Activated B cell treated with CpG ODN at 0.5 μM for 24 hours (primary cell): ENCODE measurements at regions of chr20 and their contacts with region 1.

Region 1: GRCh38 chr20:34676642-34677373 is at the start of gene PIGU:
- DNase-seq: peak; percentile 91
- ATAC-seq: peak; percentile 94
- H3K4me3 Mint-ChIP-seq: peak within 1 kb of the TSS; percentile 98
- H3K27ac Mint-ChIP-seq: peak within 1 kb of the TSS; percentile 95
- H3K4me1 Mint-ChIP-seq: peaks cover 15% of the 10 kb centered on the region
- H3K27me3 Mint-ChIP-seq: no peaks in the 10 kb centered on the region
- CTCF ChIP-seq: no peak
- total RNA-seq, gene PIGU: 14.7 and 15.3 TPM in 2 replicates

Region 2: DNA sequence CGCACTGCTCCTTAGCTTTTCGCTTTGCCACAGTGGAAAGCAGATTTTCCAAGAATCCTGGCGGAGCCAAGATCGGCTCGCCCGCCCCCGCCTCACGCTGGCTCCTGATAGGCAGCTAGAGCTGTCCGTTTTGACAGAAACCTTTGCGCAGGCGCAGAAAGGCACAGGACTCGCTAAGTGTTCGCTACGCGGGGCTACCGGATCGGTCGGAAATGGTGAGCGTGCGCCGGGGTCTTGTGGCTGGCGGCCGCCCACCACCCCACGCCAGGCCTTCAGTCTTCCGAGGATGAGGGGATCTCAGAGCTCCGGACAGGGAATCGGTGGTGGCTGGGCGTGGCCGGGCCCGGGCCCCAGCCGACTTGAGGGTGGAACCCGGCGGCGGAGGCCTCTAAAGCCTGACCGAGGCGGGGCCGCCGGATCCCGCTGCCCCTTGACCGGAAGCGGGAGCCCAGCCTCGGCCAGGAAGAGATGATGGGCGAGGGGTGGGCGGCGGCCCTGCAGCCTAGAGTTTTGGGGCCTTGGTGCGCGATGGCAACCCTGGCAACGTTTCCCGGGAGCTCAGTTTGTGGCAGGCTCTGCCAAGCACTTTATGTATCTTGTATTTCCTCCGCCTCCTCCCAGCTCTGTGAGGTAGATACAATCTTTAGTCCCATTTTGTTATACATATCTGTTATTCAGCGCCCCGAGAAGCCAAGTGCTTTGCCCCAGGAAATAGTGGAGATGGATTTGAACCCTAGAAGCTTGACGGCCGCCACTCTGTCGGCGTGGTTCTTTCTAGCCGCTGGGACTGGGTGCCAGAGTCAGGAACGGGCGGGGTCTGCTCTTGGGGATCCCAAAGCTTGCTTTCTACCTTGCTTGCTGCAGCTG is 160.3 kb before region 1 on chr20 and contains the start of gene DYNLRB1:
- CTCF ChIA-PET with region 1: no interaction called
- POLR2A ChIA-PET with region 1: interaction called, 29 read pairs
- intact Hi-C with region 1: loop called (anchors 1 kb)
- DNase-seq: peak; percentile 88
- ATAC-seq: peak; percentile 82
- H3K4me3 Mint-ChIP-seq: peak within 1 kb of the TSS; percentile 98
- H3K27ac Mint-ChIP-seq: peak within 1 kb of the TSS; percentile 96
- H3K4me1 Mint-ChIP-seq: peaks cover 48% of the 10 kb centered on the region
- H3K27me3 Mint-ChIP-seq: no peaks in the 10 kb centered on the region
- CTCF ChIP-seq: no peak
- total RNA-seq, gene DYNLRB1: 62.7 and 65.9 TPM in 2 replicates

Region 3: GRCh38 chr20:34558320-34559218 is 118.2 kb before region 1 on chr20 and contains the start of gene MAP1LC3A:
- CTCF ChIA-PET with region 1: no interaction called
- POLR2A ChIA-PET with region 1: interaction called, 3 read pairs
- intact Hi-C with region 1: loop called (anchors 1 kb)
- DNase-seq: peak; percentile 91
- ATAC-seq: peak; percentile 81
- H3K4me3 Mint-ChIP-seq: peak within 1 kb of the TSS; percentile 85
- H3K27ac Mint-ChIP-seq: peak within 1 kb of the TSS; percentile 53
- H3K4me1 Mint-ChIP-seq: peaks cover 21% of the 10 kb centered on the region
- H3K27me3 Mint-ChIP-seq: no peaks in the 10 kb centered on the region
- CTCF ChIP-seq: no peak
- total RNA-seq, gene MAP1LC3A: 1.6 TPM in 2 replicates

Region 4: DNA sequence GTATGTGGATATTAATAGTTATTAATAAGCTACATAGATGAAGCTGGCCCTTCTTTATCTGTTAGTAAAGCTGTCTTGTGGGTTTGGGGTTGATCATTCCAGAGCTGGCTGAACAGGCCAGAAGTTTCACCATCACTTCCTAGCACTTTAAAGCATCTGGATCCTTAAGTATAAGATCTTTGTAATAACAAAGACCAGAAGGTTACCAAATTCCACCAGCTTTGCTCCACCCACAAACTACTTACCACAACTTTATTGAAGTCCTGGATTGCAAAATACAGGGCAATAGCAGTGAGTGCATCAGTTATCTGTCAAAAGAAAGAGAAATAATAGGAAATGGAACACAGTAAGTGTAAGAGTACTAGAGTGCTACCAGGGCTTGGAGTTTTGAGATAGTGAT is 32.9 kb before region 1 on chr20:
- CTCF ChIA-PET with region 1: no interaction called
- POLR2A ChIA-PET with region 1: no interaction called
- intact Hi-C with region 1: no loop called
- DNase-seq: no peak
- ATAC-seq: no peak
- H3K4me3 Mint-ChIP-seq: no peak overlapping the region
- H3K27ac Mint-ChIP-seq: no peak overlapping the region
- H3K4me1 Mint-ChIP-seq: no peaks in the 10 kb centered on the region
- H3K27me3 Mint-ChIP-seq: no peaks in the 10 kb centered on the region
- CTCF ChIP-seq: no peak